Breast epithelium (tissue), 4 donors: ENCODE measurements at regions of chr6 and their contacts with region 1.

Region 1: GRCh38 chr6:156622185-156622584 is 155.0 kb upstream of the ARID1B start:
- DNase-seq: no peak
- H3K4me3 ChIP-seq: no peak overlapping the region
- H3K27ac ChIP-seq: no peak overlapping the region
- H3K4me1 ChIP-seq: no peaks in the 10 kb centered on the region
- H3K27me3 ChIP-seq: no peaks in the 10 kb centered on the region
- CTCF ChIP-seq: no peak
- POLR2A ChIP-seq: no peak

Region 2: DNA sequence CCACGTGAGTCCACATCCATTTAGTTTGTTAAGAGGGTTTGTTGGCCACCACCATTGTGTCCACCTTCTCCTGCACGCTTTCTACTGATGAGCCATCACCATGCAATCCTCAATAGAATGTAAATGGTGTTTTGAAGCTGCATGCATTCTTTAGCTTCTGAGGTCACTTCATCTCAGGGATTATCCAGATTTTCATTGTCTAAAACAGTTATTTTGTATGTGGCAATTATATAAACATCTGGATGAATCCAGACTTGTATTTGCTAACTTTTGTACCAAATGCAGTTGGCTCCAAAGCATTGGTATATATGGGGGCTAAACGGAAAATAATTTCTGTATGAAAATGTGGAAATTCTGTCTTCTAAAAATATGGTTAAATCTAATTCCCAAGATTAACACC is 76.3 kb before region 1 on chr6:
- intact Hi-C with region 1: loop called (anchors 2 kb)
- DNase-seq: no peak
- H3K4me3 ChIP-seq: no peak overlapping the region
- H3K27ac ChIP-seq: no peak overlapping the region
- H3K4me1 ChIP-seq: no peaks in the 10 kb centered on the region
- H3K27me3 ChIP-seq: no peaks in the 10 kb centered on the region
- CTCF ChIP-seq: no peak
- POLR2A ChIP-seq: no peak

Region 3: GRCh38 chr6:157169656-157170055 is 547.5 kb after region 1 on chr6:
- intact Hi-C with region 1: no loop called
- DNase-seq: no peak
- H3K4me3 ChIP-seq: no peak overlapping the region
- H3K27ac ChIP-seq: no peak overlapping the region
- H3K4me1 ChIP-seq: no peaks in the 10 kb centered on the region
- H3K27me3 ChIP-seq: no peaks in the 10 kb centered on the region
- CTCF ChIP-seq: no peak
- POLR2A ChIP-seq: no peak